Ovary (tissue), 10 donors: ENCODE measurements at regions of chr1 and their contacts with region 1.

Region 1: DNA sequence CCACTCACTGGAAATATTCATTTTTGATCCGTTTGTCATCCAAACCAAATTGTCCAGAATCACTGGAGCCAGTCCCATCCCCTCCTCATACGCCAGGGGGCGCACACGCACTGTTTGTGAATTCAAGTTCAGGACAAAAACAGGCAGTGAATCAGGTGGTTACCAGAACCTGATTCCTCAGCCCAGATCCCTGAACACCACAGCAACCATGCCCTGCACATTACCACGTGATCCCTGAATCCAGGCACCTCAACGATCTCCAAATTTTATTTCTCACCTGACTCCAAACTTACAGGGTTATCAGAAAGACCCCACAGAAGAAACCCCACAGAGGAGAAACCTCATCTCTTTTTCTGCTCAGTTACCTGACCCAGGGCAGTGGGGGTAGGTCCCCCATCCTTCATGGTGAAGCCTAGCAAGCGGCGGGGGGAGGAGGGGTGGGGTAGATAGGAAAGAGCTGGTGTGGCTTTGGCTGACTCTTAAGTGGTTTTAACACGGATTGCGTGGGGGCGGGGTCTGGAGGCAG is 1.4 kb upstream of the PTPRF start:
- DNase-seq: peak; percentile 80 to 91 (median 90)
- H3K4me3 ChIP-seq: no peak overlapping the region
- H3K27ac ChIP-seq: no peak overlapping the region
- H3K4me1 ChIP-seq: peaks cover 5% of the 10 kb centered on the region
- H3K27me3 ChIP-seq: no peaks in the 10 kb centered on the region
- CTCF ChIP-seq: peak; percentile 90 to 94 (median 93)
- EP300 ChIP-seq: no peak
- POLR2A ChIP-seq: no peak

Region 2: DNA sequence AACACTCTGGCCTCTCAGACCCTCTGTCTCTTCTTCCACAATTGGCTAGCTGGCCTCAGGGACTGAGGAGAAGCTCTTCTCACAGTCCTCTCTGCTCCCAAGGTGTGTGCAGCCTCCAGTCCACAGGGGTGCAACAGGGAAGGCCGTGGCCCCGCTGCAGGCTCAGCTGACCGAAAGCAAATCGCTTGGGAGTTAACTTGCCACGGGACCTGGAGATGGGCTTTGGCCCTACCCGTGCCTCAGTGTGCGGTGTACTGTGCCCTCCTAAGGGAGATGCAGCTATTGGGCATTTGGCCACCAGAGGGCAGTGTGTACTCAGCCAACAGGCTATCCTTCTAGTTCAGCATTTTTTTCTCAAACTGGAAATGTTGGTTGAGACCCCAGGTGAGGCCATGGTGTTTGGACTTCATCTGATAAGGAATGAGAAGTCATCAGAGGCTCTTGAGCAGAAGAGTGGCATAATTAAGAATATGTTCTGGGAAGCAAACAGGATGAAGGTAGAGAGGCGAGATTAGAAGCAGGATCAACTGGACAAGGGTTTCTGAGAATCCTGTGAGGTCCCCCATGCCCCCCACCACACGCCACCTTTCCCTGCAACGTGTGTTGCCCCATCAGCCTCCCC is 302.0 kb before region 1 on chr1:
- intact Hi-C with region 1: loop called in 1 of 4 experiments (anchors 10 kb)
- DNase-seq: peak; percentile 80 to 90 (median 89)
- H3K4me3 ChIP-seq: no peak overlapping the region
- H3K27ac ChIP-seq: no peak overlapping the region
- H3K4me1 ChIP-seq: peaks cover 7% of the 10 kb centered on the region
- H3K27me3 ChIP-seq: no peaks in the 10 kb centered on the region
- CTCF ChIP-seq: peak; percentile 80 to 94 (median 88)
- EP300 ChIP-seq: no peak
- POLR2A ChIP-seq: no peak

Region 3: DNA sequence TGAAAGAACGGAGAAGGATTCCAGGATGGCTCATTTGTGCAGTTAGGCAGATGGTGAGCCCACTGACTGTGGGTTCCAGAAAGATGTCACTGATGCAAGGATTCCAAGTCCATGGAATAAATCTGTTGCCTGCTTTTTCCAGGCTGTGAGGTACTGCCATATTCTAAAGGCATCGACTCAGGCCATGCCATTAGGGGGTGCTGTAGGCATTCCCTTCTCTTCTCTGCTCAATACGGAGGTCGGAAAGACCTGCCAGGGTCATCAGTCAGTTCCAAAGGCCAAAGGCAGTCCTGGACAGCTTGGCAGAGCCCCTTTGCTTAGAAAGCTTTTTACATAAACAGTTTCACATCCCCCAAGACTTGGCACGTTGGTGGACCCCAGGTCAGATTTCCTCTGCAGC is 291.2 kb before region 1 on chr1:
- intact Hi-C with region 1: no loop called
- DNase-seq: peak in 4 of 5 donors; percentile 30 to 69 (median 42)
- H3K4me3 ChIP-seq: no peak overlapping the region
- H3K27ac ChIP-seq: no peak overlapping the region
- H3K4me1 ChIP-seq: no peaks in the 10 kb centered on the region
- H3K27me3 ChIP-seq: no peaks in the 10 kb centered on the region
- CTCF ChIP-seq: no peak
- EP300 ChIP-seq: no peak
- POLR2A ChIP-seq: no peak

Region 4: GRCh38 chr1:43573066-43573800 is 44.0 kb after region 1 on chr1:
- intact Hi-C with region 1: loop called in 3 of 4 experiments (anchors 5 kb)
- DNase-seq: no peak
- H3K4me3 ChIP-seq: no peak overlapping the region
- H3K27ac ChIP-seq: no peak overlapping the region
- H3K4me1 ChIP-seq: peaks cover 4% of the 10 kb centered on the region
- H3K27me3 ChIP-seq: no peaks in the 10 kb centered on the region
- CTCF ChIP-seq: no peak
- EP300 ChIP-seq: no peak
- POLR2A ChIP-seq: no peak

Region 5: DNA sequence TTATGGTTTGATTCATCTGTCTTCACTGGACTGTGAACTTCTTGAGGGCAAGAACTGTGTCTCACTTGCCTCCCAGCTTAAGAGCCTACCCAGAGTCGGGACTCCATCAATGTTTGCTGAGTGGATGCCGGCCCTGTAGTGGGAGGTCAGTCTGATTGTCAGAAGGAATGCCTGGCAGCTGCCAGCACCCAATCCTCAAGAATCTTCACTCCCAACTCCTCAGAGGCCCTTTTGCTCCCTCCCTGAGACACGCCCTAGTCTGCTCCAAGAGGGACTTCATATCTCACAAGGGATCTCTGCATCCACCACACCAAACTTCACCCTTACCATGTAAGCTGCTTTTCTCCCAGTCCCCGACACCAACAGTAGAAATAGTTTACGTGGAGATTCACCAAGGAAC is 105.5 kb after region 1 on chr1:
- intact Hi-C with region 1: no loop called
- DNase-seq: no peak
- H3K4me3 ChIP-seq: no peak overlapping the region
- H3K27ac ChIP-seq: no peak overlapping the region
- H3K4me1 ChIP-seq: no peaks in the 10 kb centered on the region
- H3K27me3 ChIP-seq: no peaks in the 10 kb centered on the region
- CTCF ChIP-seq: no peak
- EP300 ChIP-seq: no peak
- POLR2A ChIP-seq: no peak

Region 6: GRCh38 chr1:43668956-43669355 is 139.7 kb after region 1 on chr1:
- intact Hi-C with region 1: loop called in 1 of 4 experiments (anchors 10 kb)
- DNase-seq: no peak
- H3K4me3 ChIP-seq: no peak overlapping the region
- H3K27ac ChIP-seq: no peak overlapping the region
- H3K4me1 ChIP-seq: no peaks in the 10 kb centered on the region
- H3K27me3 ChIP-seq: no peaks in the 10 kb centered on the region
- CTCF ChIP-seq: no peak
- EP300 ChIP-seq: no peak
- POLR2A ChIP-seq: no peak

Region 7: GRCh38 chr1:43743206-43743605 is 213.9 kb after region 1 on chr1:
- intact Hi-C with region 1: loop called in 1 of 4 experiments (anchors 10 kb)
- DNase-seq: no peak
- H3K4me3 ChIP-seq: no peak overlapping the region
- H3K27ac ChIP-seq: no peak overlapping the region
- H3K4me1 ChIP-seq: no peaks in the 10 kb centered on the region
- H3K27me3 ChIP-seq: no peaks in the 10 kb centered on the region
- CTCF ChIP-seq: no peak
- EP300 ChIP-seq: no peak
- POLR2A ChIP-seq: no peak

Region 8: DNA sequence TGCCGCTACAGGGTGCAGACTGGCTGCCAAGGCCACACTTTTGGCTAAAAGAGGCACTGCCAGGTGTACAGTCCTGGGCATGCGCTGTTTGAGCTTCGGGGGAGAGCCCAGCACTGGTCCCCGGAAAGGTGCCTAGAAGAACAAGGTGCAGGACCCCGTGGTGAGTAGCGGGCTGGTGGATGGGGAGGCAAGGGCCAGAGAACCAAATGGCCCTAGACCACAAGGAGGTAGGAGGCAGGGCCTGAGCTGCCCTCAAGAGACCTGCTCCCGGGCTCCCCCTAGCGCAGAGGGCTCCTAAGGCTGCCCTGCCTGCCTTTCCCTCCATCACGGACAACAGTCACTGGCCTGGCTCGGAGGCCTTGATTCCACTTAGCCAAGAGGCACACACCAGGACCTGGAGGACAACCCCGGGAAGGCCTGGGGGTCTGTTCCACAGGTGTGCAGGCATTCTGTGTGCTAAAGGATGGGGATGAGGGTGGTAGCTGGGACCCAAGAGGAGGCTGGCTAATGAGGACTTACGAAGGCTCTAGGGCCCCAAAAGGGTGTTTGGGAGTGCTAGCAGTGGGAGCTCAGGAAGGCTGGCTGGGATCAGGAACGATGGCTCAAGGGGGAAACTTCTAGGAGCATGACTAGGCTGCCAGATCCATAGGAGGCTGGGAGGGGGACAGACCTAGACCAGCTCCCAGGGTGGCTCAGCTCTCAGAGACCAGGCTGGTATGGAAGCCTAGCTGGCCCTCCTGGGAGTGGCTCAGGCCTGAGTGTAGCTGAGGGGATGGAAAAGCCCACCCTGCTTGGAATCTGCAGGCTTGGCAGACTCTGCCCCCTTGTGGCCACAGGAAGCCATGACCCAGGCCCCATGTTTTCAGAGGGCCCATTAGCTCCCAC is 405.1 kb after region 1 on chr1:
- intact Hi-C with region 1: loop called (anchors 5 to 10 kb)
- DNase-seq: peak; percentile 34 to 74 (median 64)
- H3K4me3 ChIP-seq: no peak overlapping the region
- H3K27ac ChIP-seq: no peak overlapping the region
- H3K4me1 ChIP-seq: peaks cover 4% of the 10 kb centered on the region
- H3K27me3 ChIP-seq: no peaks in the 10 kb centered on the region
- CTCF ChIP-seq: peak; percentile 74 to 81 (median 79)
- EP300 ChIP-seq: no peak
- POLR2A ChIP-seq: no peak